ENCODE measurements at regions of chr6 and their contacts with region 1.

Region 1: GRCh38 chr6:20056350-20056992 is 155.8 kb downstream of the MBOAT1 start:
- DNase-seq: peak; percentile 12
- H3K4me3 ChIP-seq: no peak overlapping the region
- CTCF ChIP-seq: peak; percentile 31

Region 2: DNA sequence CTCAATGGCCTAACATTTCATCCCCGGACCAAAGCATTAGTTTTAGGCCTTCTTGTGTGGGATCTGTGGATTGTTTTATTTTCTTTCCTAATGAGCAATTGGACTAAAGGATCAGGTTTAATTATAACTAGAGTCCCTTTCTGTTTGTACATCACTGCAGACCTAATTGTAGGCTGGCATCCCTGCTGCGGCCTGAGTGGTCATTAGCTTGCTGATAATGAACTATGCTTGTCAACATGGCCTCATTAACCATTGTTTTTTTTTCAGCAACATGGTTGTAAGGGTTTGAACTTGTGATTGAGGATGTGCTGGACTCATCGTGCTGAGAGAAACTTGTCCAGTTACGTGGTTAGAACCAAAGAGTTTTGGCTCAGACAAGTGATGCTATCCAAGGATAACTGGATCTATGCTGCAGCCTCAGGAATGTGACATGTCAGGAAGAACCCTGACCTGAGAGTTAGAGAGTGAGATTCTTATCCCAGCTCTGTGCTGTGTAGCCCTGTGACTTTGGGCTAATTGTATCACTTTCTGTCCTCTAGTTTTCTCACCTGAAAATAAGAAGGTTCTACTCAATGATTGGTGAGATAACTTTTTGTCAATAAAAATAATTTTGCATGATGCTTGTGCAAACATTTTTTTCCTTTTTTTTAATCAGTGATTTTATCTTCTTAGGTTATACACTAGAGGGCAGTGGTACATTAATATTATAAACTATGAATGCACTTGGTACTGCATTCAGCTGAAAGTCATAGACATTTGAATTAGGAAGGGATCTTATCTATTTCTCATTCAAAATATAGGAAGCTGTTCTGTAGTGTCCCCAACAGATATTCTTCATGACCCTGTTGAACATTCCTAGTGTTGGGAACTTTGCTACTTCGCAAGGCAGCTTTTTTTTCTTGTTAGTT is 1528.4 kb before region 1 on chr6:
- CTCF ChIA-PET with region 1: interaction called, 17 read pairs
- POLR2A ChIA-PET with region 1: no interaction called
- DNase-seq: no peak
- H3K4me3 ChIP-seq: no peak overlapping the region
- CTCF ChIP-seq: no peak

Region 3: DNA sequence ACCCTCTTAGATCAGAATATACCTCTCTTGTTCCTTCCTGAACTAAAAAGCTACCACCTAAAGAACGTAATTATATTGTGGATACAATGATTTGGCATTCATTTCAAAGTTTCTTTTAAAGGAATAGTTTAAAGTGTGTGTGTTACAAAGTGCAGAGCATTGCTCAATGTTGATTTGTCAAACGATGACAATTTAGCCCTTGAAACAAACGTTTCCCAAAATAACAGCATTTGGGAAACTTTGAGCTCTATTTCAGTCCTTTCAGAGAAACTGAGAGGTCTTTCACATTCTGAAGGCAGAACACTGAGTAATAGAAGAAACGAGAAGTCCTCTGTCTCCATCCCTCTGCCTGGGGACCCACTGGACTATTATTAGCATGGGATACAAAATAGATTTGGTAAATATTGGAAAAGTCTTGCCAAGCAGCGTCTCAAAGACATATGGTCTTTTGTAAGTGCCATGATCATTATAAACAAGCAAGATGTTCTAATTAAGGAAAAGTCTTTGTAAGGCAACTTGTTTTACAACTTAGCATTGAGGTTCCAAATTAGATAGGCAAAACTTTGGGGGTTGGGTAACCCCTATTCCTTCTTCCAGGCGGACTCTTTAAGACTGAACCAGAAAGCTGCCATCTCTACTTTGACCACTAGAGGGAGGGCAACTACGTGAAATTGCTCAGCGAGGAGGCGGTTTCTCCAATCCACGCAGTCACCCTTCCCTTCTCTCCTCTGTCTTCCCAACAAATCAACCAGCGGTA is 1460.5 kb before region 1 on chr6:
- CTCF ChIA-PET with region 1: interaction called, 16 read pairs
- POLR2A ChIA-PET with region 1: no interaction called
- DNase-seq: peak; percentile 16
- H3K4me3 ChIP-seq: no peak overlapping the region
- CTCF ChIP-seq: peak; percentile 91

Region 4: GRCh38 chr6:20266851-20267608 is 210.6 kb after region 1 on chr6:
- CTCF ChIA-PET with region 1: no interaction called
- POLR2A ChIA-PET with region 1: no interaction called
- DNase-seq: no peak
- H3K4me3 ChIP-seq: no peak overlapping the region
- CTCF ChIP-seq: no peak